ENCODE measurements at regions of chr14 and their contacts with region 1.

Region 1: DNA sequence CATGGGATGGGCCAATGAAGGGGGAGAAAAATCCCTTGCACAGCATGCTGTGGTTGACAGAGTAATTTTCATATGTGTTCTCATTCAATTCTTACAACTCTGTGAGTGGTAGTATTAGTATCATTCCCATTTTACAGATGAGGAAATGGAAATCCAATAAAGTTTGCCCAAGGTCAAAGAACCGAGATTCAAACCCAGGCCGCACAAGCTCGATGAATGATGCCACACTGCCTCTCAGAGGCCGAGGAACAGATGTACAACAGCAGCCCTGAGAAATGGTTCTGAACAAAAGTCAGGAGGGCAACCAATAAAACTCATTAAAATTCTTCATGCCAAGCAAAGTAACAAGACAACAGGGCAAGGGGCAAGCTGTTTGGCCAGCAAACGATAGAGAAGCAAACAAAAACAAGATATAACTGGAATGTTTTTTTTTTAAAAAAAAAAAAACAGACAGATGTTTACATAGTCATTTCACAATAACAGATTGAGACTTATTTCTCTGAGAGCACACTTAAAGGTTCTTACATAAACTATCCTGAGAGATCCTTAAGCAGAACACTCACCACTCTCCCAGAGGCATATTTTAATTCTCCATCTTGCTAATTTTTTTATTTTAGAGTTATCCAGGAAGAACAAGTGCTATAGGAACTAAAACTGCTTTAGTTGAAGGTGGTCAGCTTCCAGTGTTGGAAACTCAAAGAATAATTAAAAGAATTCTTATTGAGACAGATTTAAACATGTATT is 85.8 kb downstream of the EXOC5 start:
- DNase-seq: no peak
- ATAC-seq: no peak
- H3K4me3 ChIP-seq: no peak overlapping the region
- H3K27ac ChIP-seq: no peak overlapping the region
- H3K4me1 ChIP-seq: no peaks in the 10 kb centered on the region
- H3K27me3 ChIP-seq: peaks cover 0 to 5% of the 10 kb centered on the region in 2 donors

Region 2: GRCh38 chr14:56514663-56515371 is 668.1 kb before region 1 on chr14:
- intact Hi-C with region 1: loop called in 1 of 2 experiments (anchors 10 kb)
- DNase-seq: no peak
- ATAC-seq: no peak
- H3K4me3 ChIP-seq: no peak overlapping the region
- H3K27ac ChIP-seq: no peak overlapping the region
- H3K4me1 ChIP-seq: no peaks in the 10 kb centered on the region
- H3K27me3 ChIP-seq: no peaks in the 10 kb centered on the region

Region 3: DNA sequence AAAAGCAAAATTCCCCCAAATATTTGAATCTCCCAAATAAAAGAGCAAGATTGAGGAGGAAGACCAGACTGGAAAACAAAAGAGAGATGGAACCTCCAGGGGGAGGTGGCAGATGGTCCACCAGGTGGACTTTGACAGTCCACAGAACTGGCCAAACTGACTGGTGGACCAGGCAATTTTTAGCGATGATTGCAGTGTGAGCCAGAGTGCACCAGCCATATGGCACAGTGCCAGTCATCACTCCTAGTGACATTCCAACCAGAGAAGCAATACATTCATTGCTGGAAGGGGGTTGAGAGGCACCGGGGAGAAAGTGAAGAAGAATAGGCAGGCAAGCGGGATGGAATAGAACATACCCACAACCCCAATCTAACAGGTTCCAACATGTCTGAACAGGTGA is 97.1 kb before region 1 on chr14:
- intact Hi-C with region 1: no loop called
- DNase-seq: no peak
- ATAC-seq: no peak
- H3K4me3 ChIP-seq: no peak overlapping the region
- H3K27ac ChIP-seq: no peak overlapping the region
- H3K4me1 ChIP-seq: no peaks in the 10 kb centered on the region
- H3K27me3 ChIP-seq: no peaks in the 10 kb centered on the region

Measured in aorta (tissue), 5 donors.